Posterior vena cava (tissue), 2 donors: ENCODE measurements at regions of chr9 and their contacts with region 1.

Region 1: GRCh38 chr9:80320916-80321315 is 749.2 kb downstream of the TLE4 start:
- DNase-seq: no peak

Region 2: GRCh38 chr9:81787747-81788632 is 1467.1 kb after region 1 on chr9:
- intact Hi-C with region 1: loop called in 1 of 2 experiments (anchors 5 kb)
- DNase-seq: peak; percentile 81